IMR-90 (cell line): ENCODE measurements at regions of chr3 and their contacts with region 1.

Region 1: GRCh38 chr3:109731620-109732473 is 394.5 kb upstream of the DPPA4 start:
- DNase-seq: peak; percentile 72
- ATAC-seq: peak; percentile 99
- H3K4me3 ChIP-seq: no peak overlapping the region
- H3K27ac ChIP-seq: no peak overlapping the region
- H3K4me1 ChIP-seq: no peaks in the 10 kb centered on the region; the same call in 1 of the 2 replicates
- H3K27me3 ChIP-seq: no peaks in the 10 kb centered on the region
- CTCF ChIP-seq: peak; percentile 85
- POLR2A ChIP-seq: no peak
- RAD21 ChIP-seq: peak; percentile 90

Region 2: GRCh38 chr3:108698461-108698860 is 1033.4 kb before region 1 on chr3:
- CTCF ChIA-PET with region 1: no interaction called
- POLR2A ChIA-PET with region 1: no interaction called
- dilution Hi-C with region 1: no loop called
- in situ Hi-C with region 1: no loop called
- intact Hi-C with region 1: no loop called
- DNase-seq: no peak
- ATAC-seq: no peak
- H3K4me3 ChIP-seq: no peak overlapping the region
- H3K27ac ChIP-seq: no peak overlapping the region
- H3K4me1 ChIP-seq: no peaks in the 10 kb centered on the region
- H3K27me3 ChIP-seq: no peaks in the 10 kb centered on the region
- CTCF ChIP-seq: no peak
- POLR2A ChIP-seq: no peak
- RAD21 ChIP-seq: no peak

Region 3: GRCh38 chr3:109532257-109533216 is 199.3 kb before region 1 on chr3:
- CTCF ChIA-PET with region 1: no interaction called
- POLR2A ChIA-PET with region 1: no interaction called
- dilution Hi-C with region 1: no loop called
- in situ Hi-C with region 1: no loop called
- intact Hi-C with region 1: loop called (anchors 5 kb)
- DNase-seq: peak; percentile 83
- ATAC-seq: peak; percentile 96
- H3K4me3 ChIP-seq: no peak overlapping the region
- H3K27ac ChIP-seq: no peak overlapping the region
- H3K4me1 ChIP-seq: no peaks in the 10 kb centered on the region
- H3K27me3 ChIP-seq: no peaks in the 10 kb centered on the region
- CTCF ChIP-seq: peak; percentile 72
- POLR2A ChIP-seq: no peak
- RAD21 ChIP-seq: peak; percentile 80

Region 4: GRCh38 chr3:109678600-109678999 is 53.2 kb before region 1 on chr3:
- CTCF ChIA-PET with region 1: no interaction called
- POLR2A ChIA-PET with region 1: no interaction called
- dilution Hi-C with region 1: no loop called
- in situ Hi-C with region 1: no loop called
- intact Hi-C with region 1: no loop called
- DNase-seq: no peak
- ATAC-seq: no peak
- H3K4me3 ChIP-seq: no peak overlapping the region
- H3K27ac ChIP-seq: no peak overlapping the region
- H3K4me1 ChIP-seq: no peaks in the 10 kb centered on the region
- H3K27me3 ChIP-seq: no peaks in the 10 kb centered on the region
- CTCF ChIP-seq: no peak
- POLR2A ChIP-seq: no peak
- RAD21 ChIP-seq: no peak

Region 5: DNA sequence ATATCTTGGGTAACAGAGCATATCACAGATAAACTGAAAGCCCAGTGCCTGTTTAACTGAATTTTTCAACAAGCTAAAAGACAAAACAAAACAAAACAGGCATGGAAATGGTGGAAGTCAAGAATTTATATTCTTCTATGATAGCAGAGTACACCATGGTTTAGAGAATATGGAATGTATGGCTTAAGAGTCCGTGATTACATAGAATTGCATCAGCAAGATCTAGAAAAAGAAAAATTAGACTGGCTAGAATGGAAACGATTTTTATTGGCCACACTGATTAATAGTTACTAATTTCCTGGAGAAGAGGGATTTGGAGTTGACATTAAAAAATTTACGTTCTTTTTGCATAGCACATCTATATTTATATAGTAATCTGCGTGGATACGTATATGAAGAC is 40.7 kb after region 1 on chr3:
- CTCF ChIA-PET with region 1: no interaction called
- POLR2A ChIA-PET with region 1: no interaction called
- dilution Hi-C with region 1: no loop called
- in situ Hi-C with region 1: no loop called
- intact Hi-C with region 1: no loop called
- DNase-seq: no peak
- ATAC-seq: no peak
- H3K4me3 ChIP-seq: no peak overlapping the region
- H3K27ac ChIP-seq: no peak overlapping the region
- H3K4me1 ChIP-seq: no peaks in the 10 kb centered on the region
- H3K27me3 ChIP-seq: no peaks in the 10 kb centered on the region
- CTCF ChIP-seq: no peak
- POLR2A ChIP-seq: no peak
- RAD21 ChIP-seq: no peak

Region 6: GRCh38 chr3:109784852-109785631 is 53.2 kb after region 1 on chr3:
- CTCF ChIA-PET with region 1: interaction called, 11 read pairs
- POLR2A ChIA-PET with region 1: no interaction called
- dilution Hi-C with region 1: no loop called
- in situ Hi-C with region 1: no loop called
- intact Hi-C with region 1: no loop called
- DNase-seq: no peak
- ATAC-seq: no peak
- H3K4me3 ChIP-seq: no peak overlapping the region
- H3K27ac ChIP-seq: no peak overlapping the region
- H3K4me1 ChIP-seq: no peaks in the 10 kb centered on the region
- H3K27me3 ChIP-seq: no peaks in the 10 kb centered on the region
- CTCF ChIP-seq: no peak
- POLR2A ChIP-seq: no peak
- RAD21 ChIP-seq: no peak

Region 7: DNA sequence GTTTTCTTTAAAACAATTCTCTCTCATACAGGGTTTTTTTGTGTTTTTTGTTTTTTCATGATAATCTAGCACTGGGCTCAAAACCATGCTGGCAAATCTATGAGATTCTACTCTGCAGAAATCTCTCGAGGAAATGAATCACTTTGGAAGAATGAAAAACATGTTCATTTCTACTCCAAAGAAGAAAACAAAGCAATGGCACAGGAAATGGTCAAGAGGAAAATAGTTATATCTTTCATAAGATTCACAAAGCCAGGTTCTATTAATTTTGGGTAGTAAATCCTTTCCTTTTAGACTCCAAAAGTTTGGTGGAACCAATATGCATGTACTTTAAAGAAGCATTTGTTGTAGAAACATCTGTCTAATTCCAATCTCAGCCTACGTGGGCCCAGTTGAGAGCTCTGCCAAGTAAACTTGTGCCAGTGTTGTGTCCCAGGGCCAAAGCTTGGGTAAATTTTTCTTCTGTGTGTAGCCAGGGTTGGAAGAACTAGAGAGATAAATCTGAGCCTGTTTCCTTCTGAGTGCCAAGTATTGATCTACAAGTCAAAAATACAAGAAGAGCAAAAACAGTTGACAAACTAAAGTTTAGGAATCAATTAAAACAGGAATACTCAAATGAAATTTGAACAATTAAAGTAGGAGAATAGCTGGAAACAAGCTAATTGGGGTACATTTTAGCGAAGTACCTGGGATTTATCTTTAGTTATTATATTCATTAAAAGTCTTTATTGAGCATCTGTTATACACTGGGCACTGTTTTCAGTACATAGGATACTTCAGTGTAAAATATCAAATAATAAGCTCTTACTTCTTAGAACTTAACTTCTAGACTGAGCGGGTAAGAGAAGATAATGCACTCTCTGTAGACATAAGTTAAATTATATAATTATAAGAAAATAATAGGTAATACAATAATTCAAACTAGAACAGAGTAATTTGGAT is 682.2 kb after region 1 on chr3:
- CTCF ChIA-PET with region 1: no interaction called
- POLR2A ChIA-PET with region 1: no interaction called
- dilution Hi-C with region 1: no loop called
- in situ Hi-C with region 1: no loop called
- intact Hi-C with region 1: loop called (anchors 5 kb)
- DNase-seq: peak; percentile 84
- ATAC-seq: peak; percentile 84
- H3K4me3 ChIP-seq: no peak overlapping the region
- H3K27ac ChIP-seq: peak overlapping the region; percentile 100
- H3K4me1 ChIP-seq: peaks cover 12% of the 10 kb centered on the region
- H3K27me3 ChIP-seq: no peaks in the 10 kb centered on the region
- CTCF ChIP-seq: no peak
- POLR2A ChIP-seq: no peak
- RAD21 ChIP-seq: no peak

Region 8: DNA sequence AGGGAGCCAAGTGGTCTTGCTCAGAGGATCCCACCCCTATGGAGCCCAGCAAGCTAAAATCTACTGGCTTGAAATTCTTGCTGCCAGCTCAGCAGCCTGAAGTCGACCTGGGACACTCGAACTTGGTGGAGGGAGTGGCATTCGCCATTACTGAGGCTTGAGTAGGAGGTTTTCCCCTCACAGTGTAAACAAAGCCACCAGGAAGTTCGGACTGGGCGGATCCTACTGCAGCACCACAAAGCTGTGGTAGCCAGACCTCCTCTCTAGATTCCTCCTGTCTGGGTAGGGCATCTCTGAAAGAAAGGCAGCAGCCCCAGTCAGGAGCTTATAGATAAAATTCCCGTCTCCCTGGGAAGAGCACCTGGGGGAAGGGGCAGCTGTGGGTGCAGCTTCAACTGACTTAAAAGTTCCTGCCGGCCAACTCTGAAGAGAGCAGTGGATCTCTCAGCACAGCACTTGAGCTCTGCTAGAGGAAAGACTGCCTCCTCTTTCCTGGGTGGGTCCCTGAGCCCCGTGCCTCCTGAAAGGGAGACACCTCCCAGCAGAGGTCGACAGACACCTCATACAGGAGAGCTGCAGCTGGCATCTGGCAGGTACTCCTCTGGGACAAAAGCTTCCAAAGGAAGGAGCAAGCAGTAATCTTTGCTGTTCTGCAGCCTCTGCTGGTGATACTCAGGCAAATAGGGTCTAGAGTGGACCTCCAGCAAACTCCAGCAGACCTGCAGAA is 763.5 kb after region 1 on chr3:
- CTCF ChIA-PET with region 1: no interaction called
- POLR2A ChIA-PET with region 1: no interaction called
- dilution Hi-C with region 1: no loop called
- in situ Hi-C with region 1: no loop called
- intact Hi-C with region 1: loop called (anchors 10 kb)
- DNase-seq: no peak
- ATAC-seq: no peak
- H3K4me3 ChIP-seq: no peak overlapping the region
- H3K27ac ChIP-seq: no peak overlapping the region
- H3K4me1 ChIP-seq: no peaks in the 10 kb centered on the region
- H3K27me3 ChIP-seq: no peaks in the 10 kb centered on the region
- CTCF ChIP-seq: no peak
- POLR2A ChIP-seq: no peak
- RAD21 ChIP-seq: no peak

Region 9: DNA sequence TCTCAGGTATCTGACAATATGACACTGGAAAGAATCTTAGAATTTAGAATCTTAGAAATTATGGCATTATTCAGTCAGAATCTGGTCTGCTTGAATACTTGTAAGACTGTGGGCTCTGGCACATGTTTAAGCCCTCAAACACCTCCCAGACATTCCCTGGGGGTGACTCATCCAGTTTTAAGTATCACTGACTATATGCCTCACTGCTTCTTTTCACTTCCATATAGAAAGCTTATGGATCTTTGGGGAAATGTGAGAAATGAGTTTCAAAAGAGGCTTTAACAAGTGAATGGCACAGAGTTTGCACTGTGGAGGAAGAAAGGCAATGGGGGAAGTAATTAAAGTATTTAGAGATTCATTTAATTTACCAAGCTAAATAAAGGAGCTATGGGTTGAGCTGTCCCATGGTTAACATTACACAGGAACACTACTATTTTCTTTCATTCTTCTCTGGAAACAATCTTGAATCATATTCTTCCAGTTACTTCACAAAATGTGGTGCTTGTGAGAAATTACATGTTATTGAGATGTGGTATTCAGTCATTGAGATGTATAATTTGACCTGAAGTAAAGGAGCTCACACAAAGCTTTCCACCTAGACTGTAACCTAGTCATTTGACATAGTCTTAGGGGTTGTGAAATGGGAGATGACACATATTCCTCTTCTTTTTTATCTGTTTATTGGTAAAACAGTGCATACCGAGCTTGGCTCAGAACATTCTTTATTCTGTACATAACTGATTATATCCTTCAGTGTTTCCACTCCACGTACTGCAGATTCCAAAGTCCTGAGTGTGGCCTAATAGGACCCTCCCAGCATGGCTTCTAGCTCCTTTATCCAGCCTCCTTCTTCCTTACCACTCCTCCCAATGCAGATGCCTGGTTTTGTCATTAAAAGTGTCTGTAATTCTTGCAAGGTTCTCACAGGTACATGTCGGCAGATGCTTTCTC is 795.2 kb after region 1 on chr3:
- CTCF ChIA-PET with region 1: no interaction called
- POLR2A ChIA-PET with region 1: interaction called, 17 read pairs
- dilution Hi-C with region 1: no loop called
- in situ Hi-C with region 1: no loop called
- intact Hi-C with region 1: loop called (anchors 10 kb)
- DNase-seq: peak; percentile 95
- ATAC-seq: peak; percentile 90
- H3K4me3 ChIP-seq: no peak overlapping the region
- H3K27ac ChIP-seq: peak overlapping the region; percentile 67
- H3K4me1 ChIP-seq: peaks cover 15% of the 10 kb centered on the region
- H3K27me3 ChIP-seq: no peaks in the 10 kb centered on the region
- CTCF ChIP-seq: no peak
- POLR2A ChIP-seq: no peak; the same call in 1 of the 2 replicates
- RAD21 ChIP-seq: no peak; the same call in 1 of the 2 replicates

Region 10: DNA sequence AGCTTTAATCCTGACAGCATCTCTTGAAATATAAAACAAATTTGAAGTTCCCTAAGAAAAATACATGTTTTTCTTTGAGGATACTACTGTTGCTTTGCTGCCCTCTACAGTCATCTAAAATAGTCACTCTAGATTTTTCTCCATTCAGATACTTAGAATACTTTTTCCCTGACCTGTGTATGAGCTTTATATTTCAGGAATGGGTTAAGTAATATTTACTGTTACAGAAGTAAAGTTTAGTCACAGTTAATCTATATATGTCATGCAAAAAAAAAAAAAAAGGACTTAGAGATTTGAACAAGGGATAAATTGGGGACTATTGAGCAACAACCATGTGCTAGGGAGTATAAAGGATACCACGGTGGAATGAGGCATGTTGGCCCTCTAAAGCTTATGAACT is 1348.6 kb after region 1 on chr3:
- CTCF ChIA-PET with region 1: interaction called, 4 read pairs
- POLR2A ChIA-PET with region 1: no interaction called
- dilution Hi-C with region 1: no loop called
- in situ Hi-C with region 1: loop called (anchors 5 kb)
- intact Hi-C with region 1: loop called (anchors 1 kb)
- DNase-seq: peak; percentile 78
- ATAC-seq: peak; percentile 78
- H3K4me3 ChIP-seq: no peak overlapping the region
- H3K27ac ChIP-seq: no peak overlapping the region; the same call in 1 of the 2 replicates
- H3K4me1 ChIP-seq: peaks cover 16% of the 10 kb centered on the region
- H3K27me3 ChIP-seq: no peaks in the 10 kb centered on the region
- CTCF ChIP-seq: peak; percentile 73
- POLR2A ChIP-seq: no peak
- RAD21 ChIP-seq: peak; percentile 69